CD4-positive, alpha-beta memory T cell (primary cell): ENCODE measurements at regions of chr11 and their contacts with region 1.

Region 1: DNA sequence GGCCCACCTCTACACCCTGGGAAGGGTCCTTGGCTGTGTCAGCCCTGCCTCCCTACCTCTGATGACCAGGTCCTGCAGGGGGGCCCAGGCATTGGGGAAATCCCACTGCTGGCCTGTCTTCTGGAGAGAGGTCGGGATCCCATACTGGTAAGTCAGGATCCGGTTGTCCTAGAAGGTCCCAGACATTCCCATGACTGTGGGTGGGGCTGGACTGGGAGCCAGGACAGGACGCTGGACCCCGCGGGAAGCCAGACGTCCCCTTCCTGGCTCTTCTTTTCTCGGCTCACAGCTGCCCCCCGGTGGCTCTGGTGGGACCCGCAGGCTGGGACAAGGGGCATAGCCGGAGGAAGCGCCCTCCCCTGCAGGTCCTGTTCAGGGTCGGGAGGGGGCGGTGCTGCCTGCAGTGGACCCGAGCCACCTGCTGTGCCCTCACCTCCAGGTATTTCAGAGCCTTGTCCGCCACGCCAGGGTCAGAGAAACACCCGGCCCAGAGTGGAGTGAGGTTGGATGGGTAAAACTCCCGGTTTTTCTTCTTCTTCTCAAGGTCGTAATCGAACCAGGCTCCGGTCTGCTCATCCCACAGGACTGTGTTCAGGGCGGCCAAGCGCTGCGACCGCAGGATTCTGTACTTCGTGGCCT is 20.0 kb downstream of the TREH start:
- DNase-seq: peak; percentile 80 to 87 (median 80)
- H3K4me3 ChIP-seq: no peak overlapping the region
- H3K4me3 Mint-ChIP-seq: peak overlapping the region in 1 of 8 donors; percentile 34
- H3K27ac ChIP-seq: no peak overlapping the region
- H3K27ac Mint-ChIP-seq: no peak overlapping the region
- H3K4me1 ChIP-seq: peaks cover 11% of the 10 kb centered on the region
- H3K4me1 Mint-ChIP-seq: peaks cover 0 to 5% (median 2%) of the 10 kb centered on the region in 4 donors
- H3K27me3 ChIP-seq: no peaks in the 10 kb centered on the region
- H3K27me3 Mint-ChIP-seq: no peaks in the 10 kb centered on the region

Region 2: GRCh38 chr11:118634431-118635236 is 24.8 kb before region 1 on chr11:
- CTCF ChIA-PET with region 1: interaction called, 21 read pairs
- POLR2A ChIA-PET with region 1: no interaction called
- intact Hi-C with region 1: no loop called
- DNase-seq: no peak
- H3K4me3 ChIP-seq: no peak overlapping the region
- H3K4me3 Mint-ChIP-seq: peak overlapping the region in 3 of 8 donors; percentile 31 to 43 (median 41)
- H3K27ac ChIP-seq: no peak overlapping the region
- H3K27ac Mint-ChIP-seq: peak overlapping the region in 1 of 7 donors; percentile 64
- H3K4me1 ChIP-seq: no peaks in the 10 kb centered on the region
- H3K4me1 Mint-ChIP-seq: peaks cover 0 to 1% (median 0%) of the 10 kb centered on the region in 4 donors
- H3K27me3 ChIP-seq: no peaks in the 10 kb centered on the region
- H3K27me3 Mint-ChIP-seq: no peaks in the 10 kb centered on the region

Region 3: GRCh38 chr11:118699506-118700220 is 40.2 kb after region 1 on chr11:
- CTCF ChIA-PET with region 1: no interaction called
- POLR2A ChIA-PET with region 1: no interaction called
- intact Hi-C with region 1: no loop called
- DNase-seq: peak; percentile 82 to 89 (median 86)
- H3K4me3 ChIP-seq: no peak overlapping the region
- H3K4me3 Mint-ChIP-seq: peak overlapping the region in 7 of 8 donors; percentile 51 to 86 (median 73)
- H3K27ac ChIP-seq: peak overlapping the region; percentile 40
- H3K27ac Mint-ChIP-seq: peak overlapping the region; percentile 83 to 99 (median 98)
- H3K4me1 ChIP-seq: peaks cover 83% of the 10 kb centered on the region
- H3K4me1 Mint-ChIP-seq: peaks cover 33 to 73% (median 49%) of the 10 kb centered on the region in 4 donors
- H3K27me3 ChIP-seq: no peaks in the 10 kb centered on the region
- H3K27me3 Mint-ChIP-seq: no peaks in the 10 kb centered on the region